ENCODE measurements at regions of chr17 and their contacts with region 1.

Region 1: DNA sequence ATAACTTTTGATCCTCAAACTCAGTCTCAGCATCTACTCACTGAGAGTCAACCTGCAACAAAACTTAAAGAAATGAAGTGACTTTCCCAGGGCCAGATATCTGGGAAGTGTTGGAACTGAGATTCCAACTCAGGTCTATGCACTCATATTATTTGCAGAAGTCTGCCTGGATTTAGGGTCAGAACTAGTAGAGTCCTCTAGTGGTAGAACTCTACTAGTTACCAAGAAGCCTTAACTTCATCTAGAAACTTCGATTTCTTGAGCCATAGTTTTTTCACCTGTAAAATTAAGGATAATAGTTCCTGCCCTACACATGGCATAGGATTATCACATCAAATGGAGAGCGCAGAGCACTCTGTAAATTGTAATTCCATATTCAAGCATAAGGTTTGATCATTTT is 23.4 kb upstream of the KRT24 start:
- DNase-seq: no peak
- H3K4me3 ChIP-seq: no peak overlapping the region
- H3K27ac ChIP-seq: no peak overlapping the region
- H3K4me1 ChIP-seq: peaks cover 0 to 4% of the 10 kb centered on the region in 2 donors
- H3K27me3 ChIP-seq: no peaks in the 10 kb centered on the region
- CTCF ChIP-seq: peak in 1 of 6 experiments; percentile 19
- POLR2A ChIP-seq: no peak

Region 2: GRCh38 chr17:40647624-40648383 is 79.1 kb before region 1 on chr17 and contains the start of gene SMARCE1:
- intact Hi-C with region 1: loop called (anchors 10 kb)
- DNase-seq: peak; percentile 80
- H3K4me3 ChIP-seq: peak within 1 kb of the TSS; percentile 37 to 98 (median 81)
- H3K27ac ChIP-seq: peak within 1 kb of the TSS; percentile 97 to 100 (median 99)
- H3K4me1 ChIP-seq: peaks cover 19 to 20% of the 10 kb centered on the region in 2 donors
- H3K27me3 ChIP-seq: no peaks in the 10 kb centered on the region
- CTCF ChIP-seq: peak in 1 of 6 experiments; percentile 3
- POLR2A ChIP-seq: peak in 1 of 2 donors; percentile 47
- total RNA-seq, gene SMARCE1: 82.1 to 125 (median 108) TPM

Measured in thyroid gland (tissue), 4 donors.